ENCODE measurements at regions of chr7 and their contacts with region 1.

Region 1: DNA sequence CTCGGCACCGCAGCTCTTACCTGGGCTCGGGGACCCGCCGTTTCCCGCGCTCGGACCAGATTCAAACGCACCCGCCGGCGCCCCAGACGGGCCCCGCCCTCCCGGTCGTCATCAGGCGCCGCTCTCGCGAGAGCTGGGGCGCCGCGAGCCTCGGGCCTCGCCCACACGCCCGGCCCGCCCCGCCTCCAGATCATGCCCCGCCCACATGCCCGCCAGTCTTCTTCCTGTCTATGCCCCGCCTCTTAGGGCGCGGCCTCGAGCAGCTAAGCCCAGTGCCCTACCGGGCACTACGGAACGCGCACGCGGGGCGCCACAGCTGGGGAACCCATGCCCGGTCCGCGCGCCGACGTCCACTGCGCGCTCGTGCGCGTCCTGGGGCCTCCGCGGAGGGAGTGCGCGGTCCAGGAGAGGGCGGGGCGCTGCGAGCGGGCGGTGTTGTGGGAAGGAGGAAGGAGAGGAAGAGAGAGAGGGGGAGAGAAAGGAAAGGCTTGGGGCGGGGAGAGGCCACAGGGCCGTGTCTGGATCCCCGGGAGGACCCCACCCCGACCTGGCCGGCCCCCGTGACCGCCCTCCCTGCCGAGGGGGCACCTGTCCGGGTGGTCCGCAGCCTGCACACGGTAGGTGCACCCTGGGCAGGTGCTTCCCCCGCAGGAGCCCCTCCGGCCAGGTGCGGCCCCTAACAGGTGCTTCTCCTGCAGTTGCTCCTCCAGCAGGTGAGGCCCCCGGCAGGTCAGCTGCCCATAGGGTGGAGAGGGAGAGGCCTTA is at the start of gene NCAPG2:
- DNase-seq: peak; percentile 94 to 96
- ATAC-seq: peak; percentile 98 to 99
- H3K4me3 ChIP-seq: peak within 1 kb of the TSS; percentile 71 to 97 (median 82)
- H3K27ac ChIP-seq: peak within 1 kb of the TSS; percentile 87 to 90 (median 88)
- H3K4me1 ChIP-seq: peaks cover 0 to 17% of the 10 kb centered on the region in 2 donors
- H3K27me3 ChIP-seq: no peaks in the 10 kb centered on the region
- CTCF ChIP-seq: peak; percentile 37 to 58 (median 40)
- POLR2A ChIP-seq: peak; percentile 94 to 96
- total RNA-seq, gene NCAPG2: 3.0 to 4.5 (median 3.9) TPM

Region 2: DNA sequence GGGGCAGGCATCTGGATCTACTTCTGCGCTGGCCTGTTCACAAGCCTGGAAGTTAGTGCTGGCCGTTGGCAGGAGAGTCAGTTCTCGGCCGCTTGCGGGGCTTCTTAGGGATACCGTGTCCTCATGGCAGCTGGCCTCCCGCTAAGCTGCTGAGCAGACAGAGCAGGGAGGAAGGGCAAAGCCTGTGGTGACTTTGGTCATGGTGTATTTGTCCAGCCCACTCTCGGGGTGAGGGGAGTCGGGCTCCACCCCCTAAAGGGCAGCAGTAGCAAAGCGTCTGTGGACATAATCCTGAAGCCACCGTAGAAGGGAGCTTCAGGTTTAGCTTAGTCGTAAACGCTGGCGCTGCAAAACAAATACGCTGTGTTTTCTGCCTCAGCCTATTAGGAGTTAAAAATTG is 1554.0 kb before region 1 on chr7:
- in situ Hi-C with region 1: no loop called
- intact Hi-C with region 1: loop called (anchors 5 kb)
- DNase-seq: peak; percentile 36 to 82
- ATAC-seq: peak; percentile 86
- H3K4me3 ChIP-seq: peak overlapping the region; percentile 7 to 20 (median 14)
- H3K27ac ChIP-seq: peak overlapping the region; percentile 55 to 83 (median 74)
- H3K4me1 ChIP-seq: peaks cover 67 to 68% of the 10 kb centered on the region in 2 donors
- H3K27me3 ChIP-seq: no peaks in the 10 kb centered on the region
- CTCF ChIP-seq: no peak
- POLR2A ChIP-seq: no peak

Measured in gastrocnemius medialis (tissue), 4 donors.